HAP-1 (cell line): ENCODE measurements at regions of chr15 and their contacts with region 1.

Region 1: DNA sequence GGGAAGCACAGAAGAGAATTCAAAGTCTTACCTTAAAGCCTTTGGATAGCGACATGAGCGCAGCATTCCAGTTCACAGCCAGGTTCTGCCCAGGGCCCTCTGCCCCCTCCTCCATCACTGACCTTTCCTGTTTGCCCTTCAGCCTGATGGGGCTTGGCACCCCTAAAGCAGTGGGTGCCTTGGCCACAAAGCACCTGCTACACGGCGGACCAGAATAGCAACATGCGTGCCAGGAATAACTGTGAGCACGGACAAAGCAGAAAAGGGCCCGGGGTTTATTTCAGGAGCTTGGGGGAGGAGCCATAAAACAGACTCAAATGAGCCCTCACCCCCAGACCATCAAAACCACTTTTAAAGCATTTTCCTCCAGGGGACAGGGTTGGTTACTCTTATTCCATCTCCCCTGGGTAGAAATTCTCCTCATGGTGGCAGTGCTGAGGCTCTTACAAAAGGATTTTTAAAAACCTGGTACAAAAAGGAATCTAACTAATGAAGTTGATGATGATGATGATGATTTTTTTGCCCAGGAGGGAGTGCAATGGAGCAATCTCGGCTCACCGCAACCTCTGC is 135.4 kb downstream of the KLF13 start:
- DNase-seq: no peak
- H3K4me3 ChIP-seq: no peak overlapping the region
- H3K4me1 ChIP-seq: no peaks in the 10 kb centered on the region
- H3K27me3 ChIP-seq: no peaks in the 10 kb centered on the region; the same call in 1 of the 2 replicates

Region 2: DNA sequence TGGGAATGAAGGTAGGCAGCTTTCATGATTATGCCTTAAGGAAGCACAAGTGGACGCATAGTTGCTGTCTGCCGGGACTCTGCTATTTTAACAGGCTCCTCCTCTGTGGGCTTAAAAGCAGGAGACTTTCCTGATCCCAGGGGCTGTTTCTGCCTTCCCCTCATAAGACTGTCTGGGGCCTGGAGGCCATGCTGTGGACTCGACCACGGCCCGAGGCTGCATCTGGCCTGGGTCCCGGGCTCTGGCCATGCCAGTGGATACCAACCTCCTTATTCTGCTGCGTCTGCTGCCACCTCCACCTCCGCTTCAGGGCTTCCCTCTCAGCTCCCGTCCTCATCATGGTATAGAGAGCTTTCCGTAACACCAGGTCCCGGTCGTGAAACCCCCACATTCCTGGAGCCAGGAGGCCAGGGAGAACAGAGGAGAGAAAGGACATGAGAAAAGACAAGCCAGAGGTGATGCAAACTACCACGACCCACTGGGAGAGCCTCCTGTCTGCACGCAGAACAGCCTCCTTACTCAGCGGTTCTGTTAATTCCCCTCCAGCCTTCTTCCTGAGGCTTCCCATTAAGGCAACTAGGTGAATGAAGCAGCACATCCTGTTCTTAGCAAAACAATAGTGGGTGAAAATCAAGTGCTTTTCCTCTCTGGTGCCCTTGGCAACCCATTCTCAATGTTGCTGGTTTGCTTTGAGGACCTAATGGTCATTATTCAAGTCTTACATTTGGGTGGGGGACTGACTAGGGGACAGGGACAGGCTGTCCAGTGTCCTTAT is 65.1 kb after region 1 on chr15:
- in situ Hi-C with region 1: loop called (anchors 10 kb)
- DNase-seq: no peak
- H3K4me3 ChIP-seq: no peak overlapping the region
- H3K4me1 ChIP-seq: peaks cover 6% of the 10 kb centered on the region
- H3K27me3 ChIP-seq: no peaks in the 10 kb centered on the region

Region 3: DNA sequence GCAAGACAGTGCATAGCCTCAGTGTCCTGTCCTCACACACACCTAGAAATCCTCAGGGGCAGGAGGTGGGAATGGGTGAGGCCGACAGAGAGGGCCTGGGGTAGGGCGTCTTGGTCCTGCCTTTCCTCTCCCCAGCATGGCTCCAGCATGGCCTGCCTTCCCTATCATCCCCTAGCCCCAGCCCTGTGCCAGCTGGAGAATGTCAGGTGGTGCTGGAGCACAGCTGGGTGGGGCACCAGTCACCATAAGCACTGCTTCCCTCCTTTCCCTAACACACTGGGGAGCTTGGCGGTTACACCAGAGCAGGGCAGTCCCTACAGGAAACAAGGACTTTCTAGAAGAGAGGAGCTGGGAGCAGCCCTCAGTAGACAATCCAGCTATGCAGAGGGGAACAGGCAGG is 101.4 kb after region 1 on chr15:
- in situ Hi-C with region 1: no loop called
- DNase-seq: no peak
- H3K4me3 ChIP-seq: no peak overlapping the region
- H3K4me1 ChIP-seq: no peaks in the 10 kb centered on the region
- H3K27me3 ChIP-seq: no peaks in the 10 kb centered on the region